B cell (primary cell): ENCODE measurements at regions of chr6 and their contacts with region 1.

Region 1: DNA sequence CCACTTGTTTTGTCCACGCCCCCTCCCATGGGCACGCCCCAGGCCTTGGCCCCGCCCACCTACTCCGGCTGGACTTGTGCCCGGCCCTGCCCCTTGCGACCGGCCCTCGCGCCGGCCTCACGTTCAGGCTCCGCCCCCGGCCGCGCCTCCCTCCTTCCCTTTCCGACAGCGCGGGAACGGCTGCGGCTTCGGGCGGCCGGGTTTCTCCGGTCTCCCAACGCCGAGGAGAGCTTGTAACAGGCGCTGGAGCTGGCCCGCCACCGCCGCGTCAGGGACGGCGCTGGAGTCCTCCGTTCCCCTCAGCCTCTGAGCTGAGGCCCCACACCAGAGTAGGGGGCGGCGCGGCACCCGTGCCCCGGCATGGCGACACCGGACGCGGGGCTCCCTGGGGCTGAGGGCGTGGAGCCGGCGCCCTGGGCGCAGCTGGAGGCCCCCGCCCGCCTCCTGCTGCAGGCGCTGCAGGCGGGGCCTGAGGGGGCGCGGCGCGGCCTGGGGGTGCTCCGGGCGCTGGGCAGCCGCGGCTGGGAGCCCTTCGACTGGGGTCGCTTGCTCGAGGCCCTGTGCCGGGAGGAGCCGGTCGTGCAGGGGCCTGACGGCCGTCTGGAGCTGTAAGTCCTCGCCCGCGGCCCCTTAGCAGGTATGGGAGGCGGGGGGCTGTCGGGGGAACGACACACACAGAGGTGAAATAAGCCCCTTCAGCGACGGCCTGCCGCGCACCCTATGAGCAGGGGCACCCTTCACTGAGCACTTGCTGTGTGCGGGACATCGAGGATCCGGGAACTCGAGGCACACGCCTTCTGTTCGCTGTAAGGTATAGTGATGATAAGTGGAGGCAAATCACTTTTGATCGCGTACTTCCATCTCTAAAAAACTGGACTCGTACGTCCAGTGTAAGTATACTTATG is at the start of gene FANCE:
- DNase-seq: peak; percentile 90
- ATAC-seq: peak; percentile 92
- H3K4me3 ChIP-seq: peak within 1 kb of the TSS; percentile 70 to 89 (median 79)
- H3K4me3 Mint-ChIP-seq: peak within 1 kb of the TSS; percentile 86
- H3K27ac ChIP-seq: peak within 1 kb of the TSS; percentile 23 to 25
- H3K27ac Mint-ChIP-seq: peak within 1 kb of the TSS; percentile 63
- H3K4me1 ChIP-seq: peaks cover 14 to 21% of the 10 kb centered on the region in 2 donors
- H3K4me1 Mint-ChIP-seq: peaks cover 33% of the 10 kb centered on the region
- H3K27me3 ChIP-seq: no peaks in the 10 kb centered on the region
- H3K27me3 Mint-ChIP-seq: no peaks in the 10 kb centered on the region
- CTCF ChIP-seq: no peak
- total RNA-seq, gene FANCE: 12.7 and 12.8 TPM in 2 replicates

Region 2: GRCh38 chr6:35311390-35312075 is 140.9 kb before region 1 on chr6:
- CTCF ChIA-PET with region 1: interaction called, 10 read pairs
- POLR2A ChIA-PET with region 1: no interaction called
- intact Hi-C with region 1: no loop called
- DNase-seq: peak; percentile 60
- ATAC-seq: peak; percentile 65
- H3K4me3 ChIP-seq: peak overlapping the region in 4 of 5 experiments; percentile 16 to 48 (median 44)
- H3K4me3 Mint-ChIP-seq: peak overlapping the region; percentile 81
- H3K27ac ChIP-seq: peak overlapping the region; percentile 78 to 89
- H3K27ac Mint-ChIP-seq: peak overlapping the region; percentile 99
- H3K4me1 ChIP-seq: peaks cover 41 to 44% of the 10 kb centered on the region in 2 donors
- H3K4me1 Mint-ChIP-seq: peaks cover 72% of the 10 kb centered on the region
- H3K27me3 ChIP-seq: no peaks in the 10 kb centered on the region
- H3K27me3 Mint-ChIP-seq: no peaks in the 10 kb centered on the region
- CTCF ChIP-seq: no peak

Region 3: GRCh38 chr6:35342258-35343091 is 110.0 kb before region 1 on chr6 and contains the start of gene PPARD:
- CTCF ChIA-PET with region 1: interaction called, 205 read pairs
- POLR2A ChIA-PET with region 1: interaction called, 21 read pairs
- intact Hi-C with region 1: loop called (anchors 1 kb)
- DNase-seq: peak; percentile 97
- ATAC-seq: peak; percentile 99
- H3K4me3 ChIP-seq: peak within 1 kb of the TSS; percentile 48 to 92 (median 77)
- H3K4me3 Mint-ChIP-seq: peak within 1 kb of the TSS; percentile 99
- H3K27ac ChIP-seq: peak within 1 kb of the TSS; percentile 69 to 91
- H3K27ac Mint-ChIP-seq: peak within 1 kb of the TSS; percentile 95
- H3K4me1 ChIP-seq: peaks cover 39 to 49% of the 10 kb centered on the region in 2 donors
- H3K4me1 Mint-ChIP-seq: peaks cover 55% of the 10 kb centered on the region
- H3K27me3 ChIP-seq: no peaks in the 10 kb centered on the region
- H3K27me3 Mint-ChIP-seq: no peaks in the 10 kb centered on the region
- CTCF ChIP-seq: peak; percentile 92
- total RNA-seq, gene PPARD: 38.9 and 39.0 TPM in 2 replicates

Region 4: DNA sequence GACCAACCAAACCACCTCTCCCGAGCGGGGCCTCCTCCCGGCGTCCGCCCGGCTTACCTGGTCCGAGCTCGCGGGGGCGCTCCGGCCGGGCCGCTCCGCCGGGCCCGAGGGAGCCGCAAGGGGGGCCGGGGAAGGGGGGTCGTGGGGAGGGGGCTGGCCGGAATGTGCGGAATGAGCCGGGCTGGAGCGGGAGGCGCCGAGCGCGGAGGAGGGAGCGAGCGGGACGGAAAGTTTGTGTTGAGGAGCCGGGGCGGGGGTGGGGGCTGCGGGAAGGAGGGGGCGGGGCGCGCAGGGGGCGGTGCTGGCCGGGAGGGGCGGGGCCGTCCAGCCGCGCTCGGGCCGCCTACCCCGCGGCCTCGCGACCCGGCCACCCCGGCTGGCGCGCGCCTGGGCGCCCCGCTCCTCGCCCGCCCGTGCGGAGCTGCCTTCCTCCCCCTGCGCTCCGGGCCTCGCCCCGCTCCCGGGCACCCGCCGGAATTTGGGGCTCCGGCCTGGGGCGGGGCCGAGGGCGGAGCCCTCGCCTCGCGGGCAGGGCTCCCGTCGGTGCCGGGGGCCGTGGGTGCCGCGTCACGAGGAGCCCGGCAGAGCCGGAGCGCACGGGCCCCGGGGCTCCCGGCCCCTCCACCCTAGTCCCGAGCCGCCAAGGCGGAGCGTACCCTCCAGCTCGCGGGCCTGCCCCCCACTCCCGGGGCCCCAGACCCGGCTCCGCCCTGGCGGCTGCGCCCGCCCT is 44.6 kb after region 1 on chr6 and contains the start of gene TEAD3:
- CTCF ChIA-PET with region 1: no interaction called
- POLR2A ChIA-PET with region 1: no interaction called
- intact Hi-C with region 1: loop called (anchors 1 kb)
- DNase-seq: peak; percentile 79
- ATAC-seq: peak; percentile 73
- H3K4me3 ChIP-seq: peak within 1 kb of the TSS; percentile 39 to 78 (median 63)
- H3K4me3 Mint-ChIP-seq: peak within 1 kb of the TSS; percentile 83
- H3K27ac ChIP-seq: no peak within 1 kb of the TSS
- H3K27ac Mint-ChIP-seq: peak within 1 kb of the TSS; percentile 46
- H3K4me1 ChIP-seq: peaks cover 14 to 22% of the 10 kb centered on the region in 2 donors
- H3K4me1 Mint-ChIP-seq: peaks cover 21% of the 10 kb centered on the region
- H3K27me3 ChIP-seq: peaks cover 0 to 40% (median 17%) of the 10 kb centered on the region in 4 experiments
- H3K27me3 Mint-ChIP-seq: peaks cover 36% of the 10 kb centered on the region
- CTCF ChIP-seq: no peak
- total RNA-seq, gene TEAD3: 0.17 TPM in 2 replicates